GM13977 (cell line): ENCODE measurements at regions of chr1 and their contacts with region 1.

Region 1: DNA sequence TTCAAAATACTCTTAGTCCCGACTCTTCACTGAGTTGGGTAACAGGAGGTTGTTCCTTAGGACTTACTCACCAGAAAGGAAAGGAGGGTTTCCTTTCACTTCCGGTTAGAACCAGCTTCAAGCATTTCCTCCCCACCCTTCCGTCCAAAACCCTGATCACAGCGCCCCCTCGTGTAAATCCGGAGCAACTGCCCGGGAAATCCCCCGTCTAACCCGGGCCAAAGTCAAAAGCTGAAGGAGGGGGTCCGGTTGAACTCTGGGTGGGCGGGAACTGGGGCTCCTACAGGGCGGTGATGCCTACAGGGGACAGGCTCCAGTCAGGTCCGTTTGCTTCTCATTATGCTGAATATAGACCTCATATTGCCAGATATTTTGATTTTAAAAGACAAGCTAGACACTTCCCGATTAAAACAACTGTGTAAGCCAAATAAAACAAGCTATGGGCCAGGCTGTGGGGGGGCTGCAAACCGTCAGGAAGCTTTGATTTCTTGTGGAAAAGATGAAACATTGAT is 15.0 kb upstream of the MTARC2 start:
- DNase-seq: peak; percentile 70
- CTCF ChIP-seq: peak; percentile 76

Region 2: DNA sequence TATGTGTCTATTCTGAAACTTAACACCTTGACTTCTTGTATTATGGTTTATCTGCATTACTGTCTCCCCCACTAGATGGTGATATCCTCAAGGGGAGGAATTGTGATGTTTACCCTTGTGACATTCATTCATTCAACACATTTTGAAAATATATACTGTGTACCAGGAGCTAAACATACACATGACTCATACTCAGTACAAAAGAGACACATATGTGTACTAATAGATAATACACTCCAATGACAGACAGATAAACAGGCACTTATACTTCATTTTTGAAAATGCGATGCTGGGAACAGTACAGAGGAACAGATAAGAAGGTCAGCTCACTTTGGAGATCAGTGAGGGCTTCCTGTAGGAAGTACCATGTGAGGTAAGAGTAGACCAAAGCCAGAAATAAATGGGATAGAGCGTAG is 452.0 kb before region 1 on chr1:
- in situ Hi-C with region 1: loop called (anchors 25 kb)
- DNase-seq: no peak
- CTCF ChIP-seq: peak; percentile 38